ENCODE measurements at regions of chr15 and their contacts with region 1.

Region 1: GRCh38 chr15:69085325-69086081 is 71.0 kb downstream of the NOX5 start:
- DNase-seq: no peak
- ATAC-seq: no peak
- H3K4me3 ChIP-seq: no peak overlapping the region
- H3K4me3 Mint-ChIP-seq: no peak overlapping the region
- H3K27ac ChIP-seq: no peak overlapping the region
- H3K27ac Mint-ChIP-seq: no peak overlapping the region
- H3K4me1 ChIP-seq: peaks cover 0 to 3% of the 10 kb centered on the region in 2 experiments
- H3K4me1 Mint-ChIP-seq: peaks cover 0 to 19% (median 0%) of the 10 kb centered on the region in 3 donors
- H3K27me3 ChIP-seq: peaks cover 0 to 15% of the 10 kb centered on the region in 2 experiments
- H3K27me3 Mint-ChIP-seq: peaks cover 26 to 33% of the 10 kb centered on the region in 2 donors

Region 2: DNA sequence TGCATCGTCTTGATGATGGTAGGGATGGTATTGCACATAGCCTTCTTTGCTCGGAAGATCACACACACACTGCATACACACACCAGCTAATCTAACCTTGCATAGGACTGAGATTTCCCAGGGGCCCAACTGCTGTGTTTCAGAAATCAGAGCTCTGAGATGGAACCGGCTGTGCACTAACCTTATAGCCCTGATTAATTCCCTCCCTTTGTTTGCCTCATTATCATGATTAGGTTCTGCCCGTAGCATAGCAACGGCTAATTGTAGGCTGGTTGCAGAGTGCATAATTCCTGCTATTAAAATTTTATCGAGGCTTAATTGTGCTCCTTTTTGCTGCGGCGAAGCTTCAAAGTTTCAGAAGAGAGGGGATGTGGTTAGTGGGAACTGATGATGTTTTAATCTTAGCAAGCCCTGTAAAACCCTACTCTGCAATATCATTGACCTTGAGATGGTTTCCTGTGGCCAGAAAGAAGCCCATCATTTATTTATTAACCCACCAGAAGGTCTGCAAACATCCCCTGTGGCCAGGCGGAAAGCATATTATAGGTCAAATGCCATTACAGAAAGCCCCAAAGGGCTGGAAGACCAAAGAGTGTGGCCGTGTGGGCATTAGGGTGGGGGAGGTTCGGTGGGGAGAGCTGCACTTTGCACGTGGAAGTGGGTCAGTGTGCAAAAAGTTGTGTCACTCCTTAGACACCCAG is 18.7 kb after region 1 on chr15:
- CTCF ChIA-PET with region 1: no interaction called
- POLR2A ChIA-PET with region 1: no interaction called
- DNase-seq: peak in 1 of 35 experiments; percentile 14
- ATAC-seq: peak; percentile 40 to 68 (median 52)
- H3K4me3 ChIP-seq: no peak overlapping the region
- H3K4me3 Mint-ChIP-seq: peak overlapping the region in 1 of 3 donors; percentile 21
- H3K27ac ChIP-seq: no peak overlapping the region
- H3K27ac Mint-ChIP-seq: no peak overlapping the region
- H3K4me1 ChIP-seq: peaks cover 0 to 20% of the 10 kb centered on the region in 2 experiments
- H3K4me1 Mint-ChIP-seq: peaks cover 20 to 43% (median 25%) of the 10 kb centered on the region in 3 donors
- H3K27me3 ChIP-seq: no peaks in the 10 kb centered on the region
- H3K27me3 Mint-ChIP-seq: no peaks in the 10 kb centered on the region

Region 3: GRCh38 chr15:69234676-69235075 is 149.2 kb after region 1 on chr15:
- CTCF ChIA-PET with region 1: no interaction called
- POLR2A ChIA-PET with region 1: interaction called in 1 of 2 experiments, 12 read pairs
- DNase-seq: no peak
- ATAC-seq: no peak
- H3K4me3 ChIP-seq: no peak overlapping the region
- H3K4me3 Mint-ChIP-seq: no peak overlapping the region
- H3K27ac ChIP-seq: no peak overlapping the region
- H3K27ac Mint-ChIP-seq: no peak overlapping the region
- H3K4me1 ChIP-seq: no peaks in the 10 kb centered on the region
- H3K4me1 Mint-ChIP-seq: no peaks in the 10 kb centered on the region
- H3K27me3 ChIP-seq: no peaks in the 10 kb centered on the region
- H3K27me3 Mint-ChIP-seq: no peaks in the 10 kb centered on the region